Posterior vena cava (tissue), 2 donors: ENCODE measurements at regions of chr6 and their contacts with region 1.

Region 1: GRCh38 chr6:168895102-168895812 is 358.4 kb downstream of the THBS2 start:
- DNase-seq: peak; percentile 92

Region 2: GRCh38 chr6:168609914-168610490 is 285.3 kb before region 1 on chr6:
- intact Hi-C with region 1: loop called in 1 of 2 experiments (anchors 5 kb)
- DNase-seq: no peak

Region 3: DNA sequence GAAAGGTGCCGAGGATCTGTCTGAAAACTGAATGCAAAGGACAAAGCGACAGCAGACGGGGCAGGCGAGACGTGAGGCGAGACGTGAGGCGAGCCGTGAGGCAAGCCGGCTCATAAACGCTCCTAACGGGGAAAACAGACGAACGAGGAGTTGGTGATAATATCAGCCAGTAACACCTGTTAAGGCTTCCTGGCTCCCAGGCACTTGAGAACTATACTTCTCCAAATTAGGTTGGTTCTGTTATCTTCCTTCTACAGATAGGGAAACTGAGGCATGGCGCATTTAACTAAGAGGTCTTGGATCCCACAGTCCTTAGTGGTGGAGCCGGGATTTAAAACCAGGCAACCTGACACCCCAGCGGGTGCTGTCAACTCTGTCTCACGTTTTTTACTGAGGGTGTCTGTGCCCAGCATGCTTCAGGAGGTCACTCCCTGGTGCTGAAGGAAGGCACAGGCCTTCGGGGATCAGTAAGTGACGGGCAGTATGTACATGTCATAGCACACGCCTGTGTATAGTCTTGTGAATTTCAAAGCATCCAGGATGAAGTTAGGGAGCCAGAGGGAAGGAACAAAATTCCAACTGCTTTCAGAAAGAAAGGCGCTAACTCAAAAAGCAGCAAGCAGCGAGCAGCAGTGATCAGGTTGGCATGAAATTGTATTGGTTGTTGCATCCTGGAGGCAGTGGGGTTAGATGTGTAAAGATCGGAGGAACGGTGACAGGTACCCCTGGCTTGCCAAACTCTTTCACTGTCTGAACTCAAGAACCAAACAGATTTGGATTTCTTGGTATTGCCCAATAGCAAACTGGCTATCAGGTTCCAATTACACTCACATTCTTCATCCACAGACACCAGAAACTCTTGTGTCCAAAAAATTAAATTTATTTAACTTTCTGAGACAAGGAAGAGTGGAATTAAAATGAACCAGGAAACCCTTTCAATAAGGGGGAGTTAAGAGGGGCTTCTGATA is 39.7 kb after region 1 on chr6:
- intact Hi-C with region 1: loop called (anchors 1 to 10 kb)
- DNase-seq: no peak

Region 4: DNA sequence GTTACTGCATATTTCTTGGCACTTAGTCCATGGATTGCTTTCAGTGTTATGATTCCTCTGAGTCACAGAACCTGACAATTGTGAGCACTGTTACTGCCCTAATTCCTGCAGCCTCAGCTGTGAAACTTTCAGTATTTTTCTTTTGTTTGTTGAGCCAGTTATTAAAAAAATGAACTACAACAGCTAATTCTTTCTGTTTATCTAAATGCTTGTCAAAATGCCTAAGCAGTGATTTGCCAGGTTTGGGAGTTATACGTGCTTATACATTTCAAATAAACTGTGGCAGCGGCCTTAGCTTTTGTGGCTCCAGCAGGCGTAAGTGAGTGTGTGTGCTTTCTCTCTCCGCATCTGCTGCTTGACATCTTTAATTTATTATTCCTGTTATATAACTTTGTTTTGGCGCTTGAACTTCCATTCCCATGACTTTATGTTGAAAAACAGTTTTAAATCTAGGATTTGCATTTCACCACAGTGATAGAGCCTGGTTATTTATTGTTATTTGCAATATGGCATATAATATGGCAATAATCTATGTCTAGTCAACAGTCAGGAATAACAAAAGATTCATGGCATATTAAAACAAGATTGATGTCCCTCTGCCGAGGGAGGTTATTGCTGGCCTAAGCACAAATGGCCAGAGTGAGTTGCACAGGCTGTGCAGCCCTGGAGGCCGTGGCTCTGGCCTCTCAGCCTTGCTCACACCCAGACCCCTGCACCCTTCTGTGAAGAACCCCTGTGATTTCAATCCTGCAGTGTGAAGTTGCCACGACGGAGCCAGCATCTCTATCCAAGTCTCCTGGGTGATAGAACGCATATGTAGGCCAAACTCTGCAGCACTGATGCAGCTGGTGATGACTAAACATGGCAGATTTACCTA is 55.0 kb after region 1 on chr6:
- intact Hi-C with region 1: loop called in 1 of 2 experiments (anchors 10 kb)
- DNase-seq: no peak

Region 5: DNA sequence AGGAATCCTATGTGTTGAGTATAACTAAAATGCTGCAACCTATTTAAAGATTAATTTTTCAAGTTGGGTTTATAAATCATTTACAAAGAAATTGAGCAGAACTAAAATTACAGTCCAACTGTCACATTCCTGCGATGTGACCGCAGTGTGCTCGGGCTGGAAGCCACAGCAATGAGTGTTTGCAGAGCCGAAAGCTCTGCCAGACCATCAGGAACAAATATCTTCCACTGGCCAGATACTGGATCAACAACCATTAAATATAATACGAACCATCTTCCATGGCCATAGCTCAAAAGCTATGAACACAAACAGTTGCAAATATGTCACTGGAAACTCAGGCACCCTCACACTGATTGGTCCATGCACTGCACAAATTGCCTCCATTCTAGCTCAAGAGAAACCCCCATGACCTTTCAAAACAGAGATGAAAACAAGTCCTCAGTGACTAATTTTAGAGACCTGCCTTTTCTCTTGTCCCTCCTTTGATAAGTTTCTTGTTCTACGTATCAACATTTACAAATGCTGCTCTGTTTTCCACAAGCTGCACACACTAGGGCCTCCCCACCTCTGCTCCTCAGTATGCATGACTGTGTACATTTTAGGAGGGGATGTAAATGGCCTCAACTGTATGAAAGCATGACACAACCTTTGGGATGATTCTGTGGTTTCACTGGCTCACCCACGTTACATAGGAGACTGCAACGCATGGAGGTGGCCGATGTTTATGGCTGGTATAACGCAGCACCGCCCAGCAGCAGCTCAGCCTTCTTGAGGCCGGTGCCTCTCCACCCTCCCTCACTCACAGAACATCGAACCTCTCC is 634.9 kb after region 1 on chr6:
- intact Hi-C with region 1: loop called in 1 of 2 experiments (anchors 10 kb)
- DNase-seq: peak; percentile 81

Region 6: GRCh38 chr6:169640351-169640852 is 745.1 kb after region 1 on chr6:
- intact Hi-C with region 1: loop called in 1 of 2 experiments (anchors 10 kb)
- DNase-seq: no peak